T-cell (primary cell): ENCODE measurements at regions of chr1 and their contacts with region 1.

Region 1: DNA sequence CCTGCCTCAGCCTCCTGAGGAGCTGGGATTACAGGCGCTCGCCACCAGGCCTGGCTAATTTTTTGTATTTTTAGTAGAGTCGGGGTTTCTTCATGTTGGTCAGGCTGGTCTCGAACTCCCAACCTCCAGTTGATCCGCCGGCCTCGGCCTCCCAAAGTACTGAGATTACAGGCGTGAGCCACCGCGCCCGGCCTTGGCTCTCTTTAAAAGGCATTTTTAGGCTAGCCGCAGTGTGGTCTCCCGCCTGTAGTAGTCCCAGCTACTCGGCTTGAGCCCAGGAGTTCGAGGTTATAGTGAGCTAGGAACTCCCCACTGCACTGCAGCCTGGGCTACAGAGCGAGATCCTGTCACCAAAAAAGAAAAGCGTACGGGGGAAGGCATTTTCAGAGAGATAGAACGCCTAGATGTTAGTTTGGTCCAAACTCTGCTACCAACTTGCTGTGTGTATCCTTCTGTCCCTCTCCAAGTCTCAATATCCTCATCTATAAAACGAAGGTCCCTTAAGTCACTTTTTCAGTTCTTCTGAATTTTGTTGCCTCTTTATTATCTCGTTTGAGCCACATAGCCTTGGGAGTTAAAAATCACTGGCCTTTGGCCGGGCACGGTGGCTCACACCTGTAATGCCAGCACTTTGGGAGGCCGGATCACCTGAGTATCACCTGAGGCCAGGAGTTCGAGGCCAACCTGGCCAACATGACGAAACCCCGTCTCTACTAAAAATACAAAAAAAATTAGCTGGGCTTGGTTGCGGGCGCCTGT is 734 bp downstream of the MED18 start:
- DNase-seq: peak in 12 of 35 experiments; percentile 5 to 62 (median 25)
- ATAC-seq: peak in 2 of 4 experiments; percentile 7 to 8
- H3K4me3 ChIP-seq: peak overlapping the region; percentile 67 to 90
- H3K4me3 Mint-ChIP-seq: peak overlapping the region; percentile 93 to 97 (median 95)
- H3K27ac ChIP-seq: peak overlapping the region; percentile 92
- H3K27ac Mint-ChIP-seq: peak overlapping the region; percentile 97 to 98
- H3K4me1 ChIP-seq: peaks cover 6 to 24% of the 10 kb centered on the region in 2 experiments
- H3K4me1 Mint-ChIP-seq: peaks cover 38 to 45% (median 42%) of the 10 kb centered on the region in 3 donors
- H3K27me3 ChIP-seq: no peaks in the 10 kb centered on the region
- H3K27me3 Mint-ChIP-seq: no peaks in the 10 kb centered on the region

Region 2: DNA sequence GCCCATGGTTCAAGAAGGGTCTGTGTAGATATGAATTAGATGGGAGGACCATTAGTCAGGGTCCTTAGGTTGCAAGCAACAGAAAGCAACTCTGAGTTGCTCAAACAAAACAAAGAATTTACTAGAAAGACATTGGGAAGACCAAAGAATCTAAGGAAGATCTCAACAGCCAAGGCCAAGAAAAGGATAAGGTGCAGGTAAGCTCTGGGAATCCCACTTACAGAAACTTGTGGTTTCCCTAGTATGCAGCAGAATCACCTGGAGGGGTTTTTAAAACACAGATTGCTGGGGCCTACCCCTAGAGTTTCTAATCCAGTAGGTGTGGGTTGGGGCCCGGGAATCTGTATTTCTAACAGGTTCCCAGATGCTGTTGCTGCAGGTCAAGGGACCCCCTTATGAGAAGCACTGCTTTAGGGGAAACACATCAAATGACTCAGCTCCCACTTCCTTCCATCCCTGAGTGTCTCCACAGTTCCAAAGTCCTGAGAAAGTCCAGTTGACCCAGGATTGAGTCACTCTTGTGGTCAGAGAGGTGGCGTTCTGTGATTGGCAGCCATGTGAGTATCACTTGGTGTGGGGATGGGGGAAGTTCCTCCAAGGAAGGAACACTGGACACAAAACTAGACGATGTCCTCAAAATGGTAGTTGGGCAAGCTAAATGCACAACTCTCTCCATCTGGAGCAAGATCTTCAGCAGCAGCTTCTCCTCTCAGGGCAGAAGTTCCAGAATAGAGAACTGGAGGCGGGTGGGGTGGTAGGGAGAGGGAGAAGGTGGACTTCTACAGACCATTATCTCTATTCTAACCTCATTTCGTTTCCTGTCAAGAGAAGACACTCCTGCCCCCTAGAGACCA is 217.0 kb before region 1 on chr1:
- CTCF ChIA-PET with region 1: no interaction called
- POLR2A ChIA-PET with region 1: interaction called in 1 of 2 experiments, 11 read pairs
- DNase-seq: peak in 2 of 35 experiments; percentile 9 to 27
- ATAC-seq: no peak
- H3K4me3 ChIP-seq: no peak overlapping the region
- H3K4me3 Mint-ChIP-seq: no peak overlapping the region
- H3K27ac ChIP-seq: no peak overlapping the region
- H3K27ac Mint-ChIP-seq: no peak overlapping the region
- H3K4me1 ChIP-seq: peaks cover 0 to 6% of the 10 kb centered on the region in 2 experiments
- H3K4me1 Mint-ChIP-seq: peaks cover 6 to 10% (median 7%) of the 10 kb centered on the region in 3 donors
- H3K27me3 ChIP-seq: peaks cover 0 to 5% of the 10 kb centered on the region in 2 experiments
- H3K27me3 Mint-ChIP-seq: peaks cover 0 to 3% of the 10 kb centered on the region in 2 donors

Region 3: GRCh38 chr1:28208818-28209441 is 120.6 kb before region 1 on chr1:
- CTCF ChIA-PET with region 1: no interaction called
- POLR2A ChIA-PET with region 1: interaction called in 1 of 2 experiments, 12 read pairs
- DNase-seq: peak in 34 of 35 experiments; percentile 9 to 77 (median 56)
- ATAC-seq: peak; percentile 58 to 84 (median 73)
- H3K4me3 ChIP-seq: no peak overlapping the region
- H3K4me3 Mint-ChIP-seq: no peak overlapping the region
- H3K27ac ChIP-seq: no peak overlapping the region
- H3K27ac Mint-ChIP-seq: no peak overlapping the region
- H3K4me1 ChIP-seq: no peaks in the 10 kb centered on the region
- H3K4me1 Mint-ChIP-seq: peaks cover 0 to 6% (median 3%) of the 10 kb centered on the region in 3 donors
- H3K27me3 ChIP-seq: no peaks in the 10 kb centered on the region
- H3K27me3 Mint-ChIP-seq: no peaks in the 10 kb centered on the region

Region 4: DNA sequence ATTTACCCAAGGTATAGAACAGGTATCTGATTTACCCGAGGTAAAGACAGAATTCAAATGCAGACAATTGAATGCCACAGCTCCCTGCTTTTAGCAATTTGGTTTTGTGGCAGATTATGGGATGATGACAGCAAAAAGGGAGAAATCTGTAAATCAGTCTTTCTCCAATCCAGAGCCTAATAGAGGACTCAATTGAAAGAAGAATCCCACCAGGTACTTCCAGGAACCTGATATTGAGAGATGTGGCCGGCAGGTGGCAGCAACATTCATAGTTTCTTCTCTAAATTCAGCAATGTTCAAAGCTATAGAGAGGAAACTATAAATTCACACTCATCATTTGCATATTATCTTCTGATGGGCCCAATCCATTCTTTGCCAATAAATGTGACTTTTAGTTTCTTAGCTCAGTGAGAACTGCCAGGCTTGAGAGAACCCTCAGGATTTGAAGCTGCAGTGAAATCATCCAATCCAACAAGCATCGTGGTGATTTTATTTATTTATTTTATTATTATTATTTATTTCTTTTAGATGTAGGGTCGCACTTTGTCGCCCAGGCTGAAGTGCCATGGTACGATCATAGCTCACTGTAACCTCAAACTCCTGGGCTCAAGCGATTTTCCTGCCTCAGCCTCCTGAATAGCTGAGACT is 30.1 kb after region 1 on chr1:
- CTCF ChIA-PET with region 1: interaction called, 3 to 17 read pairs
- POLR2A ChIA-PET with region 1: no interaction called
- DNase-seq: peak; percentile 28 to 82 (median 68)
- ATAC-seq: peak; percentile 42 to 79 (median 72)
- H3K4me3 ChIP-seq: no peak overlapping the region
- H3K4me3 Mint-ChIP-seq: no peak overlapping the region
- H3K27ac ChIP-seq: no peak overlapping the region
- H3K27ac Mint-ChIP-seq: no peak overlapping the region
- H3K4me1 ChIP-seq: no peaks in the 10 kb centered on the region
- H3K4me1 Mint-ChIP-seq: no peaks in the 10 kb centered on the region
- H3K27me3 ChIP-seq: no peaks in the 10 kb centered on the region
- H3K27me3 Mint-ChIP-seq: no peaks in the 10 kb centered on the region

Region 5: DNA sequence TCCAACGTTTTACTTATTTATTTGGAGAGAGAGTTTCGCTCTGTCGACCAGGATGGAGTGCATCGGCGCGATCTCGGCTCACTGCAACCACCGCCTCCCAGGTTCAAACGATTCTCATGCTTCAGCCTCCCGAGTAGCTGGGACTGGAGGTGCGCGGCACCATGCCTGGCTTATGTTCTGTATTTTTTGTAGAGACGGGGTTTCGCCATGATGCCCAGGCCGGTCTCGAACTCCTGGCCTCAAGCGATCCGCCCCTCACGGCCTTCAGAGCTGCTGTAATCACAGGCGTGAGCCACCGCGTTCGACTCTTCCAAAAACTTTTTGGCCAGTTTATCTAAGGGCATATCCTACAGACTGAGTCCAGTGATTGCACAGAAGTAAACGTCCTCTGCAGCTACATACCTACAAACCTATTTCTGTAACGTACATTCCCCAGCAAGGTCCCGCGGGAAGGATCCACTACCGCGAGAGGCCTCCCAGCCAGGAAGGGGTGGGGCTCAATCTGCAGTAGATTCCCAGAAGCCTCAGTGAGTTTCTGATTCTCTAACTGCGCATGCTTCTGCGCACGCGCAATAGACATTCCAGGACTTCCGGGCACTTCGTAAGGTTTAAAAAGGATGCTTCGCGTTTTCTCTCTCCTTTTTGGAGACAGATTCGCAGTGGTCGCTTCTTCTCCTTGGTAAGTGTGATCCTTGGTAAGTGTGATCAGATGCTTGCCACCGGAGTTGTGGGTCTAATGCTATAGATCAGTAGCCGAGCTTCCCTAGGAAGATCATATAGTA is 176.0 kb after region 1 on chr1 and contains the start of gene RCC1:
- CTCF ChIA-PET with region 1: no interaction called
- POLR2A ChIA-PET with region 1: interaction called, 12 to 19 read pairs
- DNase-seq: peak; percentile 83 to 99 (median 95)
- ATAC-seq: peak; percentile 89 to 92 (median 91)
- H3K4me3 ChIP-seq: peak within 1 kb of the TSS; percentile 78 to 93
- H3K4me3 Mint-ChIP-seq: peak within 1 kb of the TSS; percentile 94 to 100 (median 99)
- H3K27ac ChIP-seq: peak within 1 kb of the TSS; percentile 77
- H3K27ac Mint-ChIP-seq: peak within 1 kb of the TSS; percentile 96 to 99
- H3K4me1 ChIP-seq: peaks cover 29 to 47% of the 10 kb centered on the region in 2 experiments
- H3K4me1 Mint-ChIP-seq: peaks cover 36 to 53% (median 45%) of the 10 kb centered on the region in 3 donors
- H3K27me3 ChIP-seq: no peaks in the 10 kb centered on the region
- H3K27me3 Mint-ChIP-seq: no peaks in the 10 kb centered on the region
- total RNA-seq, gene RCC1: 13.1 to 23.2 (median 19.7) TPM